MCF 10A (cell line): ENCODE measurements at regions of chr1 and their contacts with region 1.

Region 1: GRCh38 chr1:205977402-205978014 is 25.7 kb downstream of the RAB7B start:
- DNase-seq: peak; percentile 93
- H3K4me3 Mint-ChIP-seq: no peak overlapping the region
- H3K27ac Mint-ChIP-seq: no peak overlapping the region
- H3K4me1 Mint-ChIP-seq: peaks cover 30% of the 10 kb centered on the region
- H3K27me3 Mint-ChIP-seq: peaks cover 11% of the 10 kb centered on the region
- CTCF ChIP-seq: peak; percentile 100

Region 2: GRCh38 chr1:205591522-205592351 is 385.8 kb before region 1 on chr1:
- CTCF ChIA-PET with region 1: interaction called, 12 read pairs
- POLR2A ChIA-PET with region 1: interaction called, 4 read pairs
- intact Hi-C with region 1: loop called (anchors 5 kb)
- DNase-seq: peak; percentile 99
- H3K4me3 Mint-ChIP-seq: peak overlapping the region; percentile 64
- H3K27ac Mint-ChIP-seq: peak overlapping the region; percentile 39
- H3K4me1 Mint-ChIP-seq: peaks cover 18% of the 10 kb centered on the region
- H3K27me3 Mint-ChIP-seq: no peaks in the 10 kb centered on the region
- CTCF ChIP-seq: peak; percentile 100

Region 3: DNA sequence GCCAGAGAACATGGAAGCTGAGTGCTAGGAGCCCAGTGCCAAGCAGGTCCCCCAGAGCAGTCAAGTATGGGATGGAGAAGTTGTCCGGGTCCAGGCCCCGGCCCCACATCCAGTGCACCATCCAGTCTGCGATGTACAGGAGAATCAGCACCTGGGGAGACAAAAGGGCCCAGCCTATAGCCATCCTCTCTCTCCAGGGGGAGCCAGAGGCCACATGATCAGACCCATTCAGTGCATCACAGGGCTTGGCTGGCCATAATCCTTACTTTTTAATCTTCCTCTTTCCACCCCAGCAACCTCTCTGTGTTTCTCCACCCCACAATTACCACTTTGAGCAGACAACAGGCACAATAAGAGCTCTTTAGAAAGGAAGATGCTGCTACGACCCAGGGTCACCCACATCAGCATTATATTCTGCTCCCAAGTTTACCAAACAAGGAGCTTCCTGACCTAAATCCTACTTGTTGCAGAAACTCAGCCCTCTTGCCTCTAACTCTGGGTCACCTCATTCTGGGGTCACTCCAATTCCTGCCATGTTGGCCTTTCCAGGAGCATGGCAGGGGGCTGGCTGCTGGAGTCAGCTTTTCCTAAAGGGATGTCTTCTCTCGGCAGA is 185.8 kb before region 1 on chr1:
- CTCF ChIA-PET with region 1: interaction called, 174 read pairs
- POLR2A ChIA-PET with region 1: interaction called, 8 read pairs
- intact Hi-C with region 1: loop called (anchors 1 kb)
- DNase-seq: peak; percentile 89
- H3K4me3 Mint-ChIP-seq: no peak overlapping the region
- H3K27ac Mint-ChIP-seq: no peak overlapping the region
- H3K4me1 Mint-ChIP-seq: no peaks in the 10 kb centered on the region
- H3K27me3 Mint-ChIP-seq: no peaks in the 10 kb centered on the region
- CTCF ChIP-seq: peak; percentile 99

Region 4: DNA sequence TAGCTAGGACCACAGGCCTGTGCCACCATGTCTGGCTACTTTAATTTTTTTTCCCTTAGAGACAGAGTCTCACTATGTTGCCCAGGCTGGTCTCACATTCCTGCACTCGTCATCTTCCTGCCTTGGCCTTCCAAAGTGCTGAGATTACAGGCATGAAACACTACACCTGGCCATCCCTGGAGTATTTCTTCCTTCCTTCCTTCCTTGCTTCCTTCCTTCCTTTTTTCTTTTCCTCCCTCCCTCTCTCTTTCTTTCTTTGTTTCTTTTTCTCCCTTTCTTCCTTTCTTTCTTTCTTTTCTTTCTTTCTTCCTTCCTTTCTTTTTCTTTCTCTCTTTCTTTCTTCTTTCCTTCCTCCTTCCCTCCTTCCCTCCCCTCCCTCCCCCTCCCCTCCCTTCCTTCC is 81.2 kb before region 1 on chr1:
- CTCF ChIA-PET with region 1: interaction called, 15 read pairs
- POLR2A ChIA-PET with region 1: interaction called, 3 read pairs
- intact Hi-C with region 1: no loop called
- DNase-seq: no peak
- H3K4me3 Mint-ChIP-seq: no peak overlapping the region
- H3K27ac Mint-ChIP-seq: no peak overlapping the region
- H3K4me1 Mint-ChIP-seq: no peaks in the 10 kb centered on the region
- H3K27me3 Mint-ChIP-seq: peaks cover 14% of the 10 kb centered on the region
- CTCF ChIP-seq: no peak

Region 5: DNA sequence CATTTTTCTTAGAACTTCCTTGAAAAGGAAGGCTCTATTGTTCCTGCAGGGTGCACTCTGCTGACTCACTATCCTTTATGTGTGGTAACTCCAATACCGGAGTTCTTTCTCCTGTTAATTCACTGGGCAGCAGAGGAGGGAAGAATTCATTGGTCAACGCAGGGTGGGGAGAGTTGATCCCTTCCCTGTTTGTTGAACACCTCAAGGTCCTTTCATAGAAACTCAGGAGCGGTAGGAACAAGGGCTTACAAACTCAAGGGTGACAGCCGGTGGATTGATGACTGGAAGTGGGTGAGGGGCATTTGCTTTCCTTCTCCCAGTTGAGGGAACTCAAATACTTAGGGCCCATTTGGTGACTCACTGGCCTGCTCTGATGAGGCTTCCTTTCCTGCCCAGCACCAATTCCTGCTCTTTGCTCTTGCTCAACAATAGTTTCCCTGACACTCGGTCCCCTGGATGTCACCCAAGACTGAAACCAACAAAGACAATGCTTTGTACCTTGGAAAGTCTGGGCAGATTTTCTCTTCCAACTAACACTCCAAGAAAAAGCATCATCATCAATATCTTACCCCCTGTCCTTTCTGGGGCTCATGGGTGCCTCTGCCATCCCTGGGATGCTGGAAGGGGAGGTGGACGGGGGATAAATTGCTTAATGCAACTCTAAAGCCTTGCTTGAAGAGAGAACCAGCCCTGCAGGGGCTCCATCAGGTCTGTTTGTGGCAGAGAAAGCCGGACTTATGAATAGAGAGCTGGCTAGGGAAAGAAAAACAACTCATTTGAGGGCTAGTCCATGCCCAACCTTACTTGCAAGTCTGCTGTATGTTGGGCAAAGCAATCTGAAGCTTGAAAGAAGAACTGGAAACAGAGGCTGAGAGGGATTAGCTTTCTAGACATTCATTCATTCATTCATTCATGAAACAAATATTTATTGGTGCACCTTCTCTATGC is 43.6 kb before region 1 on chr1:
- CTCF ChIA-PET with region 1: interaction called, 911 read pairs
- POLR2A ChIA-PET with region 1: interaction called, 5 read pairs
- intact Hi-C with region 1: no loop called
- DNase-seq: peak; percentile 98
- H3K4me3 Mint-ChIP-seq: peak overlapping the region; percentile 2
- H3K27ac Mint-ChIP-seq: peak overlapping the region; percentile 60
- H3K4me1 Mint-ChIP-seq: peaks cover 40% of the 10 kb centered on the region
- H3K27me3 Mint-ChIP-seq: peaks cover 56% of the 10 kb centered on the region
- CTCF ChIP-seq: no peak

Region 6: GRCh38 chr1:205994346-205994745 is 16.8 kb after region 1 on chr1:
- CTCF ChIA-PET with region 1: interaction called, 65 read pairs
- POLR2A ChIA-PET with region 1: interaction called, 89 read pairs
- intact Hi-C with region 1: no loop called
- DNase-seq: no peak
- H3K4me3 Mint-ChIP-seq: no peak overlapping the region
- H3K27ac Mint-ChIP-seq: no peak overlapping the region
- H3K4me1 Mint-ChIP-seq: peaks cover 8% of the 10 kb centered on the region
- H3K27me3 Mint-ChIP-seq: no peaks in the 10 kb centered on the region
- CTCF ChIP-seq: no peak

Region 7: DNA sequence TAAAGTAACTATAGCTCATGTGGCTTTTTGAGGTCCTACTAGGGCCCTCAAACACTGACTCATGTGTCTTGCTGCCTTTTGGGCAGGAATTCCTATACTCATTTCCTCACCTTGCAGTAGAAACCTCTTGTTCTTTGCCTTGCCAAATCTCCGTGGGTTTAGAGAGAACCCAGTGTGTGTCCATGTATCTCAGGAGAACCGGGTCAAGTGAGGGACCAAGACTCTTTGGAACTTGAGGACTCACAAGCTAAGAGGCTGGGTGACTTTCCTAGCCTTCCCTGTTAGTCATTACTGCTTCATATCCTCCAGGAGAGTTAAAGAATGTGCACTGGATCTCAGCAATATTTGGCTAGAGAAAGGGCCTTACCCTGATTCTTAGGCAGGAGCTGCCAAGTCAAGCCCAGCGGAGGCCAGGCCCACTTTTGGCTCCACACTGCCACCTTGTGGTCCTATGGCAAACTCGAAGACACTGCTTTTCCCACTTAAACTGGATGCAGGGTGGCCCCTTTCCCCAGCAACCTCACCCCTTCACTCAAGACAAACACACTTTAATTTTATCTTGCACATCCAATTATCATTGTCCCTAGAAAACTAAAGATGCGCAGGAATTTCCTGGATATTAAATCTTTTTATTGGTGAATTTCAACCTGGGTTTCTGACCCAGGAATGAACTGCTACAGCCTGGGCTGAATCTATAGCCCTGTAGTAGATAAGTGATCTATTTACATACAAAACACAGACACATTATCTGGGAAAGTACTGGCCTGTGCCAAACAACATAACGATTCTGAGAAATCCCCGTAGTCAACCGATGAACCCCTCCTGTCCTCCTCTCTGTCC is 129.0 kb after region 1 on chr1:
- CTCF ChIA-PET with region 1: interaction called, 517 read pairs
- POLR2A ChIA-PET with region 1: interaction called, 28 read pairs
- intact Hi-C with region 1: no loop called
- DNase-seq: peak; percentile 96
- H3K4me3 Mint-ChIP-seq: no peak overlapping the region
- H3K27ac Mint-ChIP-seq: no peak overlapping the region
- H3K4me1 Mint-ChIP-seq: peaks cover 9% of the 10 kb centered on the region
- H3K27me3 Mint-ChIP-seq: peaks cover 5% of the 10 kb centered on the region
- CTCF ChIP-seq: peak; percentile 99

Region 8: GRCh38 chr1:206674745-206675175 is 697.3 kb after region 1 on chr1:
- CTCF ChIA-PET with region 1: no interaction called
- POLR2A ChIA-PET with region 1: no interaction called
- intact Hi-C with region 1: no loop called
- DNase-seq: peak; percentile 100
- H3K4me3 Mint-ChIP-seq: peak overlapping the region; percentile 48
- H3K27ac Mint-ChIP-seq: no peak overlapping the region
- H3K4me1 Mint-ChIP-seq: peaks cover 18% of the 10 kb centered on the region
- H3K27me3 Mint-ChIP-seq: no peaks in the 10 kb centered on the region
- CTCF ChIP-seq: no peak